Natural killer cell (primary cell): ENCODE measurements at regions of chr19 and their contacts with region 1.

Region 1: GRCh38 chr19:48795055-48795684 is 15.7 kb downstream of the BCAT2 start:
- DNase-seq: peak; percentile 80 to 93
- ATAC-seq: peak; percentile 97 to 99 (median 98)
- H3K4me3 ChIP-seq: peak overlapping the region; percentile 61
- H3K4me3 Mint-ChIP-seq: peak overlapping the region; percentile 87
- H3K27ac ChIP-seq: peak overlapping the region; percentile 61
- H3K27ac Mint-ChIP-seq: peak overlapping the region; percentile 76 to 93
- H3K4me1 ChIP-seq: peaks cover 12% of the 10 kb centered on the region
- H3K4me1 Mint-ChIP-seq: peaks cover 13 to 14% of the 10 kb centered on the region in 2 donors
- H3K27me3 ChIP-seq: no peaks in the 10 kb centered on the region
- H3K27me3 Mint-ChIP-seq: no peaks in the 10 kb centered on the region
- CTCF ChIP-seq: peak; percentile 97

Region 2: GRCh38 chr19:48468775-48469288 is 326.3 kb before region 1 on chr19:
- intact Hi-C with region 1: no loop called
- DNase-seq: peak; percentile 99 to 100
- ATAC-seq: peak; percentile 88 to 97 (median 88)
- H3K4me3 ChIP-seq: peak overlapping the region; percentile 92
- H3K4me3 Mint-ChIP-seq: peak overlapping the region; percentile 97
- H3K27ac ChIP-seq: peak overlapping the region; percentile 77
- H3K27ac Mint-ChIP-seq: peak overlapping the region; percentile 84 to 88
- H3K4me1 ChIP-seq: peaks cover 25% of the 10 kb centered on the region
- H3K4me1 Mint-ChIP-seq: peaks cover 6 to 47% of the 10 kb centered on the region in 2 donors
- H3K27me3 ChIP-seq: no peaks in the 10 kb centered on the region
- H3K27me3 Mint-ChIP-seq: no peaks in the 10 kb centered on the region
- CTCF ChIP-seq: no peak

Region 3: DNA sequence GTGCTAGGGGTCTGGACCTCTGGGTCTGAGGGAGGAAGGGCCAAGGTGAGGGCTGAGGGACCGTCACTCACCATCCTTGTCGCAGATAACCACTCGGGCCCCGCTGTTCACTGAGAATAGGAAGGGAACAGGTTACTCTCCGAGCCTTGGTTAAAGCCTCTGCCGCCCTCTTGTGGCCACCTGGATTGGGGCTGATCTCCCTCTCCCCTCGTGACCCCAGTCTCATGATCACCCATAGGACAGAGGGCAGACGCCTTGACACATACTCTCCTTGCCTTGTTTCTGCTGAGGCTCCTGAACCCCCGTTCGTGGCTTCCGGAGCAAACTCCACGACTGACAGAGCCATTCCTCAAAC is 40.5 kb after region 1 on chr19:
- intact Hi-C with region 1: loop called (anchors 1 kb)
- DNase-seq: peak; percentile 88 to 95
- ATAC-seq: peak; percentile 94 to 96 (median 96)
- H3K4me3 ChIP-seq: no peak overlapping the region
- H3K4me3 Mint-ChIP-seq: peak overlapping the region; percentile 69
- H3K27ac ChIP-seq: no peak overlapping the region
- H3K27ac Mint-ChIP-seq: peak overlapping the region; percentile 59 to 90
- H3K4me1 ChIP-seq: peaks cover 23% of the 10 kb centered on the region
- H3K4me1 Mint-ChIP-seq: peaks cover 14 to 23% of the 10 kb centered on the region in 2 donors
- H3K27me3 ChIP-seq: peaks cover 13% of the 10 kb centered on the region
- H3K27me3 Mint-ChIP-seq: peaks cover 0 to 25% of the 10 kb centered on the region in 2 donors
- CTCF ChIP-seq: peak; percentile 76

Region 4: GRCh38 chr19:48842789-48843162 is 47.6 kb after region 1 on chr19:
- intact Hi-C with region 1: loop called (anchors 1 kb)
- DNase-seq: peak; percentile 23 to 82
- ATAC-seq: peak; percentile 67 to 80 (median 73)
- H3K4me3 ChIP-seq: no peak overlapping the region
- H3K4me3 Mint-ChIP-seq: no peak overlapping the region
- H3K27ac ChIP-seq: no peak overlapping the region
- H3K27ac Mint-ChIP-seq: peak overlapping the region in 1 of 2 donors; percentile 4
- H3K4me1 ChIP-seq: no peaks in the 10 kb centered on the region
- H3K4me1 Mint-ChIP-seq: peaks cover 0 to 5% of the 10 kb centered on the region in 2 donors
- H3K27me3 ChIP-seq: no peaks in the 10 kb centered on the region
- H3K27me3 Mint-ChIP-seq: peaks cover 0 to 2% of the 10 kb centered on the region in 2 donors
- CTCF ChIP-seq: peak; percentile 82